BJ (cell line): ENCODE measurements at regions of chr9 and their contacts with region 1.

Region 1: DNA sequence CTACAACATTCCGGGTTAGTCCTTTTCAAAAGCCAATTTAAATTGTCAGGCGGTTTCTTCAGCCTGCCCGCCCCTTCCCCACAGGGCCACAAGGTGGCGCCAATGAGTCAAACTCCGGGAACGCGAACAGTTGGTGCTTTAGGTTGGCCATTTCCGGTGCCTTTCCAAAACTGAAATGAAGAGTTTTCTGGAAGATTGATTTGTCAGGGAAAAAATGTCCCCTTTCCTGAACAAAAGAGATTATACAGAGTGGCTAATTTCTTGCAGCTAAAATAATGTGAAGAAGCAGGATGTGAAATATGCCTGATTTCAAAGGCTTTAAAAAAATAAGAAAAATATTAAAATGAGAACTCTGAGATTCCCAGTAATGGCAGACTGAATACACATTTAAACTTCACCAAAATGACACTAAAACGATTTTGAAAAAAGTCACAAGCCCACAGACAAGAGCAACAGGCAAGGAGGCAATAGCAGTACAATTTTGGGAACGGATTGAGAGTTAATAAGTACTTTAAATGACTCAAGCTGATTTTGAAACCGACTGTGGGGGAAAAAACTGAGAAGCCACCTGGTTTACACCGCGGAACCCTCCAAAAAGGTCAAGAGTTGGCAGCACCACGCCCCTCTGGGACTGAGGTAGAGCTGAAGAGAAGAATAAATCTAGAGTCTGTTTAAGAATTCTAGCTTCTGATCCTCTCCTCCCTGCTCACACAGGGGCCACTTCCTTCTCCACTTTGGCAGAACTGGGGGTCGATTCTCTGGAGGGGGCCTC is 45.7 kb downstream of the SLC46A2 start:
- DNase-seq: no peak
- H3K4me3 ChIP-seq: no peak overlapping the region
- H3K27me3 ChIP-seq: no peaks in the 10 kb centered on the region
- CTCF ChIP-seq: peak; percentile 98

Region 2: GRCh38 chr9:112856808-112857207 is 11.9 kb after region 1 on chr9:
- CTCF ChIA-PET with region 1: interaction called, 16 read pairs
- POLR2A ChIA-PET with region 1: no interaction called
- DNase-seq: no peak
- H3K4me3 ChIP-seq: no peak overlapping the region
- H3K27me3 ChIP-seq: no peaks in the 10 kb centered on the region
- CTCF ChIP-seq: no peak

Region 3: DNA sequence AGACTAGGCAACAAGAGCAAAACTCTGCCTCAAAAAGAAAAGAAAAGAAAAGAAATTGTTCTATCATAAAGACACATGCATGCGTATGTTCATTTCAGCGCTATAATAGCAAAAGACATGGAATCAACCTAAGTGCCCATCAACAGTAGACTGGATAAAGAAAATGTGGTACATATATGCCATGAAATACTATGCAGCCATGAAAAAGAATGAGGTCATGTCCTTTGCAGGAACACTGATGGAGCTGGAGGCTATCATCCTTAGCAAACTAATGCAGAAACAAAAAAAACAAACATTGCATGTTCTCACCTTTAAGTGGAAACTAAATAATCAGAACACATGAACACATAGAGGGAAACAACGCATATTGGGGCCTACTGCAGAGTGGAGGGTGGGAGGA is 173.3 kb after region 1 on chr9:
- CTCF ChIA-PET with region 1: no interaction called
- POLR2A ChIA-PET with region 1: no interaction called
- DNase-seq: no peak
- H3K4me3 ChIP-seq: no peak overlapping the region
- H3K27me3 ChIP-seq: no peaks in the 10 kb centered on the region
- CTCF ChIP-seq: no peak

Region 4: DNA sequence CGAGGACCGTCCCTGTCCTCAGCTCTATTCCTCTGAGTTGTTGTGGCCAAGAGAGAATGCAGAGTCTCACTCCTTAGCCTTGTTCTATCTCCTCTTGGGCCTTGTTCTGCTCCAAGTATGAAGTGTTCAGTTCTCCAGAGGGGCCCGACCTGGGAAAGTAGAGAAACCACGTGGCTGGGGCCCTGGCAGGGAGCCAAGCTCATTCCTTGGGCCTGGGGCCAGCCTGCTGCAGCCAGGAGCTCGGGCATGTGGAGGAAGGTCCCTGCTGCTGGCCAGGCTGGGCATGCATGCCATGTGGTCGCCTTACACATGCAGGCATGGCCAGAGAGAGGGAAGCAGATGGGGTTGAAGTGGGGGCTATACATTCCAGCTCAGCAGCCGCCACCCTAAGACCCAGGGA is 1371.1 kb after region 1 on chr9:
- CTCF ChIA-PET with region 1: no interaction called
- POLR2A ChIA-PET with region 1: no interaction called
- DNase-seq: no peak
- H3K4me3 ChIP-seq: no peak overlapping the region
- H3K27me3 ChIP-seq: no peaks in the 10 kb centered on the region
- CTCF ChIP-seq: no peak